ENCODE measurements at regions of chr2 and their contacts with region 1.

Region 1: DNA sequence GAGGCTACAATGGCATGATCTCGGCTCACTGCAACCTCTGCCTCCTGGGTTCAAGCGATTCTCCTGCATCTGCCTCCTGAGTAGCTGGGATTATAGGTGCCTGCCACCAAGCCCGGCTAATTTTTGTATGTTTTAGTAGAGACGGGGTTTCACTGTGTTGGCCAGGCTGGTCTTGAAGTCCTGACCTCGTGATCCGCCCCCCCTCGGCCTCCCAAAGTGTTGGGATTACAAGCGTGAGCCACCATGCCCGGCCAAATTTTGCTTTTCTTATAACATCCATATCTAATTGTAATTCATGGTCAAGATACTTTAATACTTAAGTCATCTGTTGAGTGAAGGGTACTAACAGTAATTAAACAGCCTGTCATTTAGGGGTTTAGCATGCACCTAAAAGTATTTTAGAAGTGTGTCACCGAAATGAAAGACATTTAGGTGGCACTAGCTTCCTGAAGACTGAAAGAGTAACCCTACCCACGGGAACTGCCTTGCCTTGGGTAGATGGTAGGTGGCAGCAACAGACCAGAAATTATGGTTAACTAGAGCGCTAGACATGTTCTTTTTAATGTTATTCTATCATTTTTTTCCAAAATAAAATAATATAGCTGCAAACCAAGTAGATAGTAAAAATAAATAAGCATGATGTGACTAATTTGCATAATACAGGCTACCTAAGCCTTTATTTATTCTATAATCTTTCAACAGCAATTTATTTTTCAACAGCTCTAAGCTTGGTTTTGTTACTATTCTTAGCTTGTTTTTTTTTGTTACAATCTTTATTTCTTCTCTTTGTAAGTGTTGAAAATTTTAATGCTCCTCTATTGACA is 8.6 kb upstream of the ACYP2 start:
- DNase-seq: peak; percentile 69
- H3K4me3 ChIP-seq: no peak overlapping the region
- H3K27ac ChIP-seq: no peak overlapping the region
- H3K4me1 ChIP-seq: peaks cover 11% of the 10 kb centered on the region
- H3K27me3 ChIP-seq: no peaks in the 10 kb centered on the region
- CTCF ChIP-seq: peak; percentile 53 to 56
- POLR2A ChIP-seq: no peak

Region 2: GRCh38 chr2:53028259-53028658 is 1078.6 kb before region 1 on chr2:
- CTCF ChIA-PET with region 1: no interaction called
- POLR2A ChIA-PET with region 1: no interaction called
- dilution Hi-C with region 1: no loop called
- intact Hi-C with region 1: no loop called
- DNase-seq: no peak
- H3K4me3 ChIP-seq: no peak overlapping the region
- H3K27ac ChIP-seq: no peak overlapping the region
- H3K4me1 ChIP-seq: no peaks in the 10 kb centered on the region
- H3K27me3 ChIP-seq: no peaks in the 10 kb centered on the region
- CTCF ChIP-seq: no peak
- POLR2A ChIP-seq: no peak

Region 3: GRCh38 chr2:53970724-53971602 is 135.9 kb before region 1 on chr2 and contains the start of gene PSME4:
- CTCF ChIA-PET with region 1: interaction called, 5 read pairs
- POLR2A ChIA-PET with region 1: interaction called, 3 read pairs
- dilution Hi-C with region 1: no loop called
- intact Hi-C with region 1: loop called (anchors 2 kb)
- DNase-seq: peak; percentile 90
- H3K4me3 ChIP-seq: peak within 1 kb of the TSS; percentile 73 to 94 (median 93)
- H3K27ac ChIP-seq: peak within 1 kb of the TSS; percentile 86
- H3K4me1 ChIP-seq: peaks cover 17% of the 10 kb centered on the region
- H3K27me3 ChIP-seq: no peaks in the 10 kb centered on the region
- CTCF ChIP-seq: no peak
- POLR2A ChIP-seq: peak; percentile 91
- total RNA-seq, gene PSME4: 82.6 and 83.4 TPM in 2 replicates

Region 4: GRCh38 chr2:54161660-54162424 is 55.0 kb after region 1 on chr2:
- CTCF ChIA-PET with region 1: interaction called, 10 read pairs
- POLR2A ChIA-PET with region 1: no interaction called
- dilution Hi-C with region 1: no loop called
- intact Hi-C with region 1: no loop called
- DNase-seq: peak; percentile 22
- H3K4me3 ChIP-seq: no peak overlapping the region
- H3K27ac ChIP-seq: no peak overlapping the region
- H3K4me1 ChIP-seq: no peaks in the 10 kb centered on the region
- H3K27me3 ChIP-seq: no peaks in the 10 kb centered on the region
- CTCF ChIP-seq: no peak
- POLR2A ChIP-seq: no peak

Region 5: DNA sequence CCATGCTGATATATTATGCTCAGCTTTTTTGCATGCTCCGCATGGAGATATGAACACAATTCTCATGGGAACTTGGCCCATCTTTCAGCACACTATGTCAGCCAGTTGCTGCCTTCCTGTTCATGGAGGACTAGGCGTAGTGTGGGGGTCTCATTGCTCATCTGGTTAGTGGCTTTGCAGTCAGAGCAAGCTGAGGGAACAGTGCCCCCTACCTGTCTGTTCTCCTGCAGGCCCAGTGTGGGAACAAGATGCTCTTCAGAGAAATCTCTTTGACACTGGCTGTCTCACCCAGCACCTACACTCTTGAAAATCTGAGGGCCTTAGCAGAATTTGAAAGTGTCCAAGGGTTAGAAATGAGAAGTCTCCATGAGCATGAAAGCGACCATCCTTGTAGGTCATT is 396.3 kb after region 1 on chr2:
- CTCF ChIA-PET with region 1: interaction called, 50 read pairs
- POLR2A ChIA-PET with region 1: no interaction called
- dilution Hi-C with region 1: no loop called
- intact Hi-C with region 1: loop called (anchors 1 kb)
- DNase-seq: peak; percentile 66
- H3K4me3 ChIP-seq: no peak overlapping the region
- H3K27ac ChIP-seq: no peak overlapping the region
- H3K4me1 ChIP-seq: peaks cover 4% of the 10 kb centered on the region
- H3K27me3 ChIP-seq: no peaks in the 10 kb centered on the region
- CTCF ChIP-seq: peak; percentile 71 to 80
- POLR2A ChIP-seq: no peak

Region 6: GRCh38 chr2:54574107-54574859 is 467.4 kb after region 1 on chr2:
- CTCF ChIA-PET with region 1: no interaction called
- POLR2A ChIA-PET with region 1: no interaction called
- dilution Hi-C with region 1: no loop called
- intact Hi-C with region 1: no loop called
- DNase-seq: peak; percentile 58
- H3K4me3 ChIP-seq: no peak overlapping the region
- H3K27ac ChIP-seq: peak overlapping the region; percentile 100
- H3K4me1 ChIP-seq: peaks cover 86% of the 10 kb centered on the region
- H3K27me3 ChIP-seq: no peaks in the 10 kb centered on the region
- CTCF ChIP-seq: no peak
- POLR2A ChIP-seq: no peak

Region 7: DNA sequence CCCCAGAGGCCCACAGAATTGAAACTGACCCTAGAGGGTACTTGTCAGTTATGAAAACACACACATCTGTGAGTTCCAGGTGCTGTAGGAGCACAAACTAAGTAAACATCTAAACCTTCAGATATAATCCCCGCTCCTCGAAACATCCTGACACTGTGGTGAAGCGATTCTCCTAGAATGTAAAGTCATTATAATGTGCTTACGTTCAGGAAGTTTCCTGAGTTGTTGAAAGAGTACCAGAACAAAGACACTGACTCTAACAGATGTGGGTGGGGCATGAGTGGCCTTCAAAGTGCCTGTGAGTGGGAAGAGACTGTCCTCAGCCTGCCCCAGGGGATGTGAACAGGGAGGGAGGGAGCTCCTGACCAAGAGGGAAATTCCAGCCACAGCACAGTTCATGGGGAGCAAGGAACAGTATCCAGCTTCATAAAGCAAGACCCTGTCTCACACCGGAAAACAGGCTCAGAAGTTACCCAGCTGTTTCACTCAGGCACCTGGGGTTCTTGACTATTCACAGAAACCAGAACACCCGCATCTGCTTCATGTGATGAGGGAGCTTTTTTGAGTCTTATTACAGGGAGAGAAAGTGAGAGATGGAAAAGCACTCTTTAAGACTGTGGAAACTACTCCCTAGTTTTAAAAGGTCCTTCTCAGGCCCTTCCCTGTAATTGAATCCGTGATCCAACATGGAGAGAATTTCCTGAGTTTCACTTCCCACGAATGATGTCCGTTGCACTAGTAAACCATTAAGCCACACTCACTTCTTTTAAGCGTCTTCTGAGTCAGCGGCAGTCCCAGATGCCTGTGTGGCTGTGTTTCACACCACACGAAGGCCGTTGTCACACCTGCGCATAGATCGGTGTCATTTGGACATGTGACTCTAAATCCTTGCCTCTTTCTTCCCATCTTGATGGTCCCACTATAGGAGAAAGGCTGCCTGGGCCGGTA is 528.0 kb after region 1 on chr2:
- CTCF ChIA-PET with region 1: interaction called, 10 read pairs
- POLR2A ChIA-PET with region 1: no interaction called
- dilution Hi-C with region 1: no loop called
- intact Hi-C with region 1: no loop called
- DNase-seq: peak; percentile 92
- H3K4me3 ChIP-seq: no peak overlapping the region
- H3K27ac ChIP-seq: peak overlapping the region; percentile 91
- H3K4me1 ChIP-seq: peaks cover 37% of the 10 kb centered on the region
- H3K27me3 ChIP-seq: no peaks in the 10 kb centered on the region
- CTCF ChIP-seq: no peak
- POLR2A ChIP-seq: no peak

Region 8: GRCh38 chr2:54665436-54665856 is 558.6 kb after region 1 on chr2:
- CTCF ChIA-PET with region 1: interaction called, 28 read pairs
- POLR2A ChIA-PET with region 1: no interaction called
- dilution Hi-C with region 1: no loop called
- intact Hi-C with region 1: no loop called
- DNase-seq: peak; percentile 76
- H3K4me3 ChIP-seq: no peak overlapping the region
- H3K27ac ChIP-seq: no peak overlapping the region
- H3K4me1 ChIP-seq: peaks cover 16% of the 10 kb centered on the region
- H3K27me3 ChIP-seq: no peaks in the 10 kb centered on the region
- CTCF ChIP-seq: peak; percentile 74
- POLR2A ChIP-seq: no peak

Measured in endothelial cell of umbilical vein (primary cell).